Activated CD8-positive, alpha-beta T cell treated with anti-CD3 and anti-CD28 coated beads for 36 hours (primary cell): ENCODE measurements at regions of chr19 and their contacts with region 1.

Region 1: DNA sequence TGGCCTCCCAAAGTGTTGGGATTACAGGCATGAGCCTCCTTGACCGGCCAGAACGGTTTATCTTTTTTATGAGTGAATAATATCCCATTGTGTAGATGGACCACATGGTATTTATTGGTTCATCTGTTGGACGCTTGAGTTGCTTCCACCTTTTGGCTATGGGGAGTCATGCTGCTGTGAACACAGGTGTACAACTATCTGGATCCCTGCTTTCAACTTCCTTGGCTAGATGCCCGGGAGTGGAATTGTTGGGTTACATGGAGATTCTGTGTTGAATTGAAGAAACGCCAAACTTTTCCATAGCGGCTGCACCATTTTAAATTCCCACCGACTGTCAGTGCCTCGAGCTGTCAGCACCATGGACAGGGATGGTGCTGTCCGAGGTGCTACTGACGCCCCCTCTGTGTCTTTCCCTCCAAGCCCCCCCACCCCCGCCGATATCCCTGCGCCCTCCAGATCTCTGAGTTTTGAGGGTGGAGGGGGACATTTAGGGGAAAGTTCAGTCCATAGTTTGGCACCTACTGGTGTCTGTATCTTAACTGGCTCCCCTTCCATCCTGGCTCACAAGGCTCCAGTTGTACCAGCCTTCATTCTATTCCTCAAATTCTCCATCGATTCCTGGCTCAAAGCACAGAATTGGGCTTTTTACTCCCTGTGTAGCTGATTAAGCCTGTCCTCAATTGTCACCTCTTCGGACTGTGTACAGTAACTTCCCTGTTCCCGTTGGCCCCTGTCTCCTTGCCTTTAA is 27.3 kb downstream of the PNPLA6 start:
- DNase-seq: peak; percentile 28
- ATAC-seq: no peak
- H3K4me3 Mint-ChIP-seq: no peak overlapping the region
- H3K27ac Mint-ChIP-seq: no peak overlapping the region
- H3K4me1 Mint-ChIP-seq: no peaks in the 10 kb centered on the region
- H3K27me3 Mint-ChIP-seq: no peaks in the 10 kb centered on the region
- CTCF ChIP-seq: no peak

Region 2: DNA sequence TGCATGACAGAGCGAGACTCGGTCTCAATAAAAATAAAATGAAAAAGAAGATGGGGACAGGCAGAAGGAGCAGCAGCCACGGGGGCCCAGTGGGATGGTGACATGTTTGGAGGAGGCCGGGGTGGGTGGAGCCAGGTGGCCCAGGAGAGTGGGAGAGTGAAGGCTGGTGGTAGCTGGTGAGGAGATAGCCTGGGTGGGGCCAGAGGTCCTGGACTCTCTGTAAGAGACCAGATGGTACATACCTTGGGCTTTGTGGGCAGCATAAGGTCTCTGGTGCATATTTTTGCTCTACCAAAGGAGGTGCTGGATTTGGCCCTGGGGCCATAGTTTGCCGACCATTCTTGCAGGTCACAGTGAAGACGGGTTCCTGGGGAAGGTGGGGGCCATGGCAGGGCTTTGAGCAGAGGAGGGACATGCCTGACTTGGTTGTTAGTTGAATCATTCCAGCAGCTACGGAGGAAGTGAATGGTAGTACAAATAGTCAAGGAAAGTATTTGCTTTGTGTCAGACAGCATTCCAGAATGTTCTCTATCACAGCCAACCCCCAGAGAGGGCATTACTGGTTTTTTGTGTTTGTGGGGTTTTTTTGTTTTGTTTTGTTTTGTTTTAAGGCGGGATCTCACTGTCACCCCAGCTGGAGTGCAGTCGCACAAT is 145.0 kb before region 1 on chr19:
- CTCF ChIA-PET with region 1: no interaction called
- POLR2A ChIA-PET with region 1: no interaction called
- intact Hi-C with region 1: no loop called
- DNase-seq: no peak
- ATAC-seq: no peak
- H3K4me3 Mint-ChIP-seq: no peak overlapping the region
- H3K27ac Mint-ChIP-seq: peak overlapping the region; percentile 63
- H3K4me1 Mint-ChIP-seq: peaks cover 17% of the 10 kb centered on the region
- H3K27me3 Mint-ChIP-seq: no peaks in the 10 kb centered on the region
- CTCF ChIP-seq: no peak

Region 3: GRCh38 chr19:7522072-7522922 is 40.5 kb before region 1 on chr19 and contains the start of gene MCOLN1:
- CTCF ChIA-PET with region 1: interaction called, 16 read pairs
- POLR2A ChIA-PET with region 1: interaction called, 4 read pairs
- intact Hi-C with region 1: no loop called
- DNase-seq: peak; percentile 100
- ATAC-seq: peak; percentile 98
- H3K4me3 Mint-ChIP-seq: peak within 1 kb of the TSS; percentile 72
- H3K27ac Mint-ChIP-seq: peak within 1 kb of the TSS; percentile 77
- H3K4me1 Mint-ChIP-seq: peaks cover 5% of the 10 kb centered on the region
- H3K27me3 Mint-ChIP-seq: no peaks in the 10 kb centered on the region
- CTCF ChIP-seq: no peak
- total RNA-seq, gene MCOLN1: 7.9 to 9.2 TPM

Region 4: GRCh38 chr19:7578127-7578526 is 15.3 kb after region 1 on chr19:
- CTCF ChIA-PET with region 1: interaction called, 17 read pairs
- POLR2A ChIA-PET with region 1: no interaction called
- intact Hi-C with region 1: no loop called
- DNase-seq: no peak
- ATAC-seq: no peak
- H3K4me3 Mint-ChIP-seq: no peak overlapping the region
- H3K27ac Mint-ChIP-seq: no peak overlapping the region
- H3K4me1 Mint-ChIP-seq: no peaks in the 10 kb centered on the region
- H3K27me3 Mint-ChIP-seq: peaks cover 6% of the 10 kb centered on the region
- CTCF ChIP-seq: no peak

Region 5: GRCh38 chr19:7629347-7630054 is 66.7 kb after region 1 on chr19 and contains the starts of genes PET100 and XAB2:
- CTCF ChIA-PET with region 1: interaction called, 17 read pairs
- POLR2A ChIA-PET with region 1: no interaction called
- intact Hi-C with region 1: no loop called
- DNase-seq: peak; percentile 97
- ATAC-seq: peak; percentile 99
- H3K4me3 Mint-ChIP-seq: peak within 1 kb of the TSS; percentile 83
- H3K27ac Mint-ChIP-seq: peak within 1 kb of the TSS; percentile 93
- H3K4me1 Mint-ChIP-seq: peaks cover 31% of the 10 kb centered on the region
- H3K27me3 Mint-ChIP-seq: no peaks in the 10 kb centered on the region
- CTCF ChIP-seq: no peak
- total RNA-seq, gene PET100: 71.8 to 83.3 TPM
- total RNA-seq, gene XAB2: 50.7 to 54.1 TPM

Region 6: DNA sequence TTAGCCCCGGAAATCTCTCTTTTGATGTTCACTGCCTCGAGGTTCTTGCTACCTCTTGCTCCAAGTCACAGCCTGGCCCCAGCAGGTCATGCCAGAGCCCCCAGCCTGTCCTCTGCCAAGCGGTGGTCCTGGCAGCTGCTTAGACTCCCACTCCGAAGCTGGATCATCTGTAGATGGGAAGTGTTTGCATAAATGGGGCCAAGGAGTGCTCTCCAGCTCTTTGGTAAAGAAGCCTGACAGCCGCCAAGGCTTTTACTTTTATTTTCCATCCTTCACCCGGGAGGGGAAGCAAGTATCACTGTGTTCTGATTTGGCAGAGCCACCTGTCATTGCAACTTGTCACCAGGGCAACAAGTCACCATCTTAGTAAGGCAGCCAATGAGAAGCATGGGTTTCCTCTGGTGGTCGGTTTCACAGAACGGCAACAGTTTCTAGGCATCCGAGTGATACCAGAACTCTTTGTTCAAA is 95.4 kb after region 1 on chr19:
- CTCF ChIA-PET with region 1: interaction called, 14 read pairs
- POLR2A ChIA-PET with region 1: no interaction called
- intact Hi-C with region 1: no loop called
- DNase-seq: peak; percentile 78
- ATAC-seq: peak; percentile 80
- H3K4me3 Mint-ChIP-seq: peak overlapping the region; percentile 68
- H3K27ac Mint-ChIP-seq: peak overlapping the region; percentile 78
- H3K4me1 Mint-ChIP-seq: peaks cover 30% of the 10 kb centered on the region
- H3K27me3 Mint-ChIP-seq: peaks cover 2% of the 10 kb centered on the region
- CTCF ChIP-seq: no peak

Region 7: DNA sequence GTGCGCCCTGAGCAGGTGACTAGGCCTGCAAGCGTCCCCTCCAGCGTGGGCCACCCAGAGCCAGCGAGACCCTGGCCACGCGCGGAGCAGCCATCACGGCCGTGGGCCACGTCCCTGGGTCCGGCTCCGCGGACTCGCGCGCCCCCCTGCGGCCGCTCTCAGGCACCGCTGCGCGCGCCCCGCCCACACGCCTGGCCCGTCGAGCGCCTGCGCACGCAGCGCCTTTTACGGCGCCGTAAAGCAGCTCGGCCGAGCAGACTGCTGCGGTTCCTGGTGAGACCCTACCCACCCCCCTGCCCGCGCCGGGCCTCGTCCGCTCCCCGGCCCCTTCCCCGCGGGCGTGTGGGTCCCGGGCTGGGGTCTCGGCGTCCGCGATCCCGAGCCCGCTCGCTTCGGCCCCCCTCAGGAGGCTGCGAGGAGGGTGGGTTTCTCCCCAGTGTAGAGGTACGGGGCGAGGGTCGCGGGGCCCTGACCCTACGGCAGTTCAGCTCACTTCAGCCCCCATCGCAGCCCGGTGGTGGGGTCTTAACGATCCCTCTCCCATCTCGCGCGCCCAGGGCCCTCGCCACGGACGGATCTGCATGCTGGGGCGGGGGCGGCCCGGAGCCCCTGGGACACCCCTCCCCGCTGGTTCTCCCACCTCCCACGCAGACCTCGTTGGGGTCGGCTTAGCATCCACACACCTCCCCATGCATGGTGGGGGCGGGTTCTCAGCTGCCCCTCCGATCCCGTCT is 118.0 kb after region 1 on chr19 and contains the start of gene TRAPPC5:
- CTCF ChIA-PET with region 1: interaction called, 41 read pairs
- POLR2A ChIA-PET with region 1: interaction called, 3 read pairs
- intact Hi-C with region 1: loop called (anchors 5 kb)
- DNase-seq: peak; percentile 88
- ATAC-seq: peak; percentile 38
- H3K4me3 Mint-ChIP-seq: peak within 1 kb of the TSS; percentile 92
- H3K27ac Mint-ChIP-seq: peak within 1 kb of the TSS; percentile 95
- H3K4me1 Mint-ChIP-seq: peaks cover 52% of the 10 kb centered on the region
- H3K27me3 Mint-ChIP-seq: peaks cover 27% of the 10 kb centered on the region
- CTCF ChIP-seq: peak; percentile 99
- total RNA-seq, gene TRAPPC5: 85.0 to 85.9 TPM

Region 8: GRCh38 chr19:7819337-7819736 is 256.5 kb after region 1 on chr19:
- CTCF ChIA-PET with region 1: interaction called, 11 read pairs
- POLR2A ChIA-PET with region 1: no interaction called
- intact Hi-C with region 1: no loop called
- DNase-seq: no peak
- ATAC-seq: peak; percentile 42
- H3K4me3 Mint-ChIP-seq: no peak overlapping the region
- H3K27ac Mint-ChIP-seq: no peak overlapping the region
- H3K4me1 Mint-ChIP-seq: peaks cover 8% of the 10 kb centered on the region
- H3K27me3 Mint-ChIP-seq: peaks cover 34% of the 10 kb centered on the region
- CTCF ChIP-seq: no peak